Endothelial cell of umbilical vein (primary cell): ENCODE measurements at regions of chr19 and their contacts with region 1.

Region 1: GRCh38 chr19:12736995-12737834 is at the start of gene GET3:
- DNase-seq: peak; percentile 100
- H3K4me3 ChIP-seq: peak within 1 kb of the TSS; percentile 64 to 99 (median 69)
- H3K27ac ChIP-seq: peak within 1 kb of the TSS; percentile 87
- H3K4me1 ChIP-seq: peaks cover 22% of the 10 kb centered on the region
- H3K27me3 ChIP-seq: no peaks in the 10 kb centered on the region
- CTCF ChIP-seq: no peak
- POLR2A ChIP-seq: peak; percentile 89
- total RNA-seq, gene GET3: 74.8 and 77.0 TPM in 2 replicates

Region 2: DNA sequence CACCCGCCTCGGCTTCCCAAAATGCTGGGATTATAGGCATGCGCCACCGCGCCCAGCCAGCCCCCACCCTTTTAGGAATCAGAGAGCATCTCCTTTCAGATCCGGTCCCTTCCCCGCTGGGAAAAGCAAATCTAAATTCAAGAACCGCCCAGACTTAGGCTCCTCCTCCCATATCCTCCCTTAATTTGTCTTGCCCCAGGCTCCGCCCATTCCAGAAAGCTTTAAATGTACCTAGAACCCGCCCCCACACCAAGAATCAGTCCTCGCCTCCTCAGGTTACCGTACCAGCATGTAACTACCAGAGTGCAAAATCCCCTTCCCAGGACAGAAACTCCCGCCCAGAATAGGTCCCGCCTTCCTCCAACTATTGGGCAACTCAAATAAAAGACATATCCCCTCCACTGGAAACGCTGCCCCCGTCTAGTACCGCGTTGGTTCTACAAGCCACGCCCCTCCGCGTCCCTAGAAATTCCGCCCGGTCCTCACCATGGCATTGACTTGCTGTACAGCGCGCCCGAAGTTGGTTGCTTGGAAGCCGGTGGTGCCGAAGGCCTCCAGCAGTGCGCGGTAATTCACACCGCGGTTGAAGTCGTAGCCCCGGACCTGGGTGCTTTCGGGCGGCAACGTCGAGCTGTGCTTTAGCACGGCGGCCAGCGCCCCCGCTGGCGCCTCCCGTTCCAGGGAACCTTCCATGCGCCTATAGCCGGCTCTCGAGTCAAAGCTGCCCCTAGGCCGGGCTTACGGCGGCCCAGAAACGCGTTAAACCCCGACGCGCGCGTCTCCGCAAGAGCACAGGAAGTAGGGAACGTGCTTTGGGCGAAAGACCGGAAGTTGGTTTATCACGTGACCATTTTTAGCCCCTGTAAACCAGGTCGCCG is 55.9 kb before region 1 on chr19 and contains the start of gene DHPS:
- CTCF ChIA-PET with region 1: interaction called, 3 read pairs
- POLR2A ChIA-PET with region 1: no interaction called
- dilution Hi-C with region 1: no loop called
- intact Hi-C with region 1: loop called (anchors 1 kb)
- DNase-seq: peak; percentile 95
- H3K4me3 ChIP-seq: peak within 1 kb of the TSS; percentile 15 to 77 (median 54)
- H3K27ac ChIP-seq: peak within 1 kb of the TSS; percentile 80
- H3K4me1 ChIP-seq: no peaks in the 10 kb centered on the region
- H3K27me3 ChIP-seq: no peaks in the 10 kb centered on the region
- CTCF ChIP-seq: peak in 1 of 2 donors; percentile 18
- POLR2A ChIP-seq: peak; percentile 70
- total RNA-seq, gene DHPS: 68.4 and 77.4 TPM in 2 replicates

Region 3: GRCh38 chr19:12696366-12697335 is 40.6 kb before region 1 on chr19 and contains the start of gene FBXW9:
- CTCF ChIA-PET with region 1: no interaction called
- POLR2A ChIA-PET with region 1: no interaction called
- dilution Hi-C with region 1: no loop called
- intact Hi-C with region 1: loop called (anchors 1 kb)
- DNase-seq: peak; percentile 96
- H3K4me3 ChIP-seq: peak within 1 kb of the TSS; percentile 8 to 56 (median 31)
- H3K27ac ChIP-seq: peak within 1 kb of the TSS; percentile 34
- H3K4me1 ChIP-seq: peaks cover 15% of the 10 kb centered on the region
- H3K27me3 ChIP-seq: no peaks in the 10 kb centered on the region
- CTCF ChIP-seq: no peak
- POLR2A ChIP-seq: peak; percentile 88
- total RNA-seq, gene FBXW9: 11.6 and 12.4 TPM in 2 replicates

Region 4: DNA sequence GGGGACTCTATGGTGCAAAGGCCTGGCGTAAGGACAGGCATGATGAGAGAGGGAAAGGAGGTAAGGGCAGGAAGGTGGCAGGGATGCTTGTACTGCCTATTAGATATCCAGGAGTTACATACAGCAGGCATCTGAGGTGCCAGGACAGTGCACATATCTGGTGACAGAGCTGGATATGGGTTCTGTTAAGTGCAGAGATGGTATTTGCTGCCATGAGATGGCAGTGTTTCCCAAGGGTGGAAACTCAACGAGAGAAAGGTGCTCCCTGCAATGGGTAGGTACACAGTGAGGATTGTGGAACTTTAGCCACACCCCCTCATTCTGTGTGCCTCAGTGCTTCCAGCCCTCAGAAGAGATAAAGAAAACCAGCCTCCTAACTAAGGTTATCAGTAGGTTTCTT is 20.4 kb before region 1 on chr19:
- CTCF ChIA-PET with region 1: interaction called, 12 read pairs
- POLR2A ChIA-PET with region 1: interaction called, 14 read pairs
- dilution Hi-C with region 1: no loop called
- intact Hi-C with region 1: loop called (anchors 1 kb)
- DNase-seq: peak; percentile 48
- H3K4me3 ChIP-seq: no peak overlapping the region
- H3K27ac ChIP-seq: no peak overlapping the region
- H3K4me1 ChIP-seq: peaks cover 6% of the 10 kb centered on the region
- H3K27me3 ChIP-seq: no peaks in the 10 kb centered on the region
- CTCF ChIP-seq: peak; percentile 21 to 51
- POLR2A ChIP-seq: no peak

Region 5: DNA sequence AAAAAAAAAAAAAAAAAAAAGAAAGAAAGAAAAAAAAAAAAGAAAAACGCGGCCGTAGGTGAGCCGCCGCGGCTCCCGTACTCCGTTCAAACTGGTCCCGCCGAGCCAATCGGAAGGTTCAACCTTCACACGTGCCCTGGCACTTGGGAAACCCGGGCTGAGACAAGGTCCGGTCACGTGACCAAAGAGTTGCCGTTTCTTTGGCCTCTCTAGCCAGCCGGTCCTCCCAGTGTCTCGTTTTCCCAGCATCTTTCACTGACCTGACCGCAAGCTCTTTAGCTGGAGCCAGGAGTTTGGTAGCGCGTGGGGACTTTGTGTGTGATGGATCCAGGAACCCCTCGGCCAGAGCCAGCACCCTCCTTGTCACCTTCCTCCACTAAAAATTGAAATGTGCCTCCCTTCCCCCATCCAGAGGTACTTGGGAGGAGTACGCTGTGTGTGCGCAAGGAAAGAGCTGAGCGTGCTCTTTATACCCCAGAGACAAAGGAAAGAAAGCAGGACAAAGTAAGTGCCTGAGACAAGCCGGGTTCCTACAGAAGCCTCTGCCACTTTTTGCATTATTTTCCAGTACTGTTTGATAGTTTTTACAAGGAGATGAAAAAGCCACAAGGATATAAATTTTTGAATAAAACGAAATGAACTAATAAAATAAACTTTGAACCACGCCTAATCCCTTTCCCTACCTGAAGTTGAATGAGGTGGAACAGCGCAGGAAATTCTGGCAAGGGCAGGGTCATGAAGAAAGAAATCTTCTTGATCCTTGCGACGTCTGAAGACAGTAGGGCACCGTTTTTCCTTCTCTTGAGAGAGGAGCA is 14.4 kb before region 1 on chr19:
- CTCF ChIA-PET with region 1: interaction called, 4 read pairs
- POLR2A ChIA-PET with region 1: interaction called, 14 read pairs
- dilution Hi-C with region 1: no loop called
- intact Hi-C with region 1: loop called (anchors 1 kb)
- DNase-seq: peak; percentile 97
- H3K4me3 ChIP-seq: peak overlapping the region; percentile 62 to 88 (median 62)
- H3K27ac ChIP-seq: peak overlapping the region; percentile 57
- H3K4me1 ChIP-seq: peaks cover 10% of the 10 kb centered on the region
- H3K27me3 ChIP-seq: no peaks in the 10 kb centered on the region
- CTCF ChIP-seq: no peak
- POLR2A ChIP-seq: peak; percentile 62

Region 6: GRCh38 chr19:12806239-12807081 is 69.2 kb after region 1 on chr19 and contains the start of gene RNASEH2A:
- CTCF ChIA-PET with region 1: no interaction called
- POLR2A ChIA-PET with region 1: no interaction called
- dilution Hi-C with region 1: no loop called
- intact Hi-C with region 1: loop called (anchors 2 kb)
- DNase-seq: peak; percentile 88
- H3K4me3 ChIP-seq: peak within 1 kb of the TSS; percentile 21 to 48 (median 44)
- H3K27ac ChIP-seq: no peak within 1 kb of the TSS
- H3K4me1 ChIP-seq: peaks cover 15% of the 10 kb centered on the region
- H3K27me3 ChIP-seq: no peaks in the 10 kb centered on the region
- CTCF ChIP-seq: no peak
- POLR2A ChIP-seq: peak; percentile 73
- total RNA-seq, gene RNASEH2A: 25.6 and 28.5 TPM in 2 replicates